ENCODE measurements at regions of chr5 and their contacts with region 1.

Region 1: GRCh38 chr5:34464830-34465229 is 191.3 kb upstream of the RAI14 start:
- DNase-seq: no peak
- H3K4me3 ChIP-seq: no peak overlapping the region
- H3K27me3 ChIP-seq: peaks cover 2% of the 10 kb centered on the region
- CTCF ChIP-seq: no peak

Region 2: GRCh38 chr5:33997331-33997983 is 467.4 kb before region 1 on chr5:
- CTCF ChIA-PET with region 1: interaction called, 19 read pairs
- POLR2A ChIA-PET with region 1: no interaction called
- DNase-seq: peak; percentile 73
- H3K4me3 ChIP-seq: no peak overlapping the region
- H3K27me3 ChIP-seq: no peaks in the 10 kb centered on the region
- CTCF ChIP-seq: peak; percentile 78

Region 3: GRCh38 chr5:34709861-34710673 is 245.2 kb after region 1 on chr5:
- CTCF ChIA-PET with region 1: no interaction called
- POLR2A ChIA-PET with region 1: no interaction called
- DNase-seq: peak; percentile 49
- H3K4me3 ChIP-seq: no peak overlapping the region
- H3K27me3 ChIP-seq: no peaks in the 10 kb centered on the region
- CTCF ChIP-seq: no peak

Measured in BJ (cell line).